ENCODE measurements at regions of chr16 and their contacts with region 1.

Region 1: DNA sequence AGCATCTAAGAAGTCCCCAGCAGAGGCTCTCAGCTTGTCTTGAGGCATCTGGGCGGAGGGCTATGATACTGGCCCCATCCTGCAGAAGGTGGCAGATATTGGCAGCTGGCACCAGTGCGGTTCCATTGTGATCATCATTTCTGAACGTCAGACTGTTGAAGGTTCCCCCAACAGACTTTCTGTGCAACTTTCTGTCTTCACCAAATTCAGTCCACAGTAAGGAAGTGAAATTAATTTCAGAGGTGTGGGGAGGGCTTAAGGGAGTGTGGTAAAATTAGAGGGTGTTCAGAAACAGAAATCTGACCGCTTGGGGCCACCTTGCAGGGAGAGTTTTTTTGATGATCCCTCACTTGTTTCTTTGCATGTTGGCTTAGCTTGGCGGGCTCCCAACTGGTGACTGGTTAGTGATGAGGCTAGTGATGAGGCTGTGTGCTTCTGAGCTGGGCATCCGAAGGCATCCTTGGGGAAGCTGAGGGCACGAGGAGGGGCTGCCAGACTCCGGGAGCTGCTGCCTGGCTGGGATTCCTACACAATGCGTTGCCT is at the start of gene CIITA:
- DNase-seq: peak; percentile 53
- H3K4me3 Mint-ChIP-seq: peak within 1 kb of the TSS; percentile 86
- H3K27ac Mint-ChIP-seq: peak within 1 kb of the TSS; percentile 59
- H3K4me1 Mint-ChIP-seq: peaks cover 88% of the 10 kb centered on the region
- H3K27me3 Mint-ChIP-seq: peaks cover 14% of the 10 kb centered on the region
- total RNA-seq, gene CIITA: 12.0 and 13.0 TPM in 2 replicates

Region 2: DNA sequence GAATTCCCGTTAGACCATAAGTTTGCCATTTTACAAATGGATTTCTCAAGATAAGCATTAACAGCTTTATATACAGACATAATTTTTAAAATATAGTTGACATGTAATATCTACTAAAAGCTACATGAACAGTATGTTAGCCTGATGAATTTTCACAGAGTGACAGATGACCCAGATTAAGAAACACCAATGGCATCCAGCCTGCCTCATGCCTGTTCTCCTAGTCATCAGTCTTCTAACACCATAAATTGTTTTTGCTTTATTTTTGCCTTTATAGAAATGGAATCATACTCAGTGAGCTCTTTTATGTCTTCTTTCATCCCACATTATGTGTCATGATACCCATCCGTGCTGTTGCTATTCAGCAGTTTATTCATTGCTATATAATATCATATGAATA is 411.0 kb before region 1 on chr16:
- intact Hi-C with region 1: no loop called
- DNase-seq: no peak
- H3K4me3 Mint-ChIP-seq: no peak overlapping the region
- H3K27ac Mint-ChIP-seq: no peak overlapping the region
- H3K4me1 Mint-ChIP-seq: no peaks in the 10 kb centered on the region
- H3K27me3 Mint-ChIP-seq: no peaks in the 10 kb centered on the region

Region 3: GRCh38 chr16:10835281-10835931 is 41.5 kb before region 1 on chr16:
- intact Hi-C with region 1: loop called (anchors 1 kb)
- DNase-seq: peak; percentile 22
- H3K4me3 Mint-ChIP-seq: no peak overlapping the region
- H3K27ac Mint-ChIP-seq: no peak overlapping the region
- H3K4me1 Mint-ChIP-seq: peaks cover 18% of the 10 kb centered on the region
- H3K27me3 Mint-ChIP-seq: peaks cover 4% of the 10 kb centered on the region